Heart right ventricle (tissue), 16 donors: ENCODE measurements at regions of chr7 and their contacts with region 1.

Region 1: DNA sequence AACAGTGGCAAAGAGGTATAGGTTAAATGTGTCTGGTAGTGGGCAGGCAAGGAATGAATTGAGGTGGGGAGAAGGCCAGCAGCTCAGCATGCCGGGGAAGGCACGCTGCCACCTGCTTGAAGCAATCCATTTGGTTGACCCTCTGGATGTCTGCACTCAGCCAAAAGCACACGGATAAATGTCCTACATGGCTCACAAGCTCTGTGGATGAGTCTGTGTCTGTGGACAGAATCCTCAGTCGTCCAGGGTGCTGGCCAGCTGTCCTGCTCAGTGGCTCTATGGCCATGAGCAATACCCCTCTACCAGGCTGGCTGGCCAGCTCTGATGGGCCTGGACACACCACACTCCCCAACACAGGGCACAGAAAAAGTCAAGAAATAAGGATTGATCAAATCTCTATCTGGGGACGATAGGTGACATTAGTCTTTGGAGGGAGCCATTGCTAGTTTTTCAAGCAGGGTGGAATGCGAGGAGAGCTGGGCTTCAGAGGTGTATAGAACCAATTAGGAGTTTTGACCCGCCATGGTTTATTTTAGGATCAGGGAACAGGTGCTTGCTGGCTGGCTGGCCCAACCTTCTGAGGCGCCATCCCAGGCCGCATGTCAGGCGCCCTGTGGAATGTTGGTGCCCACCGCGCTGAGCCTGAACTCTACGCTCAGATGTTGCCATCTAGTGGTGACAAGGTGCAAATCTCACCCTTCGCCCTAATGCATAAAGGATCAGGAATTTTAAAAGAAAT is 493.4 kb downstream of the TNS3 start:
- DNase-seq: peak; percentile 54 to 65
- ATAC-seq: peak; percentile 85 to 95 (median 90)
- H3K4me3 ChIP-seq: no peak overlapping the region
- H3K27ac ChIP-seq: no peak overlapping the region
- H3K4me1 ChIP-seq: peaks cover 0 to 13% (median 7%) of the 10 kb centered on the region in 9 donors
- H3K27me3 ChIP-seq: no peaks in the 10 kb centered on the region
- CTCF ChIP-seq: peak; percentile 80 to 97 (median 92)

Region 2: GRCh38 chr7:45923290-45923689 is 1165.2 kb before region 1 on chr7:
- intact Hi-C with region 1: loop called (anchors 2 to 5 kb)
- DNase-seq: peak; percentile 75 to 79
- ATAC-seq: peak in 7 of 8 donors; percentile 47 to 74 (median 66)
- H3K4me3 ChIP-seq: peak overlapping the region in 9 of 10 donors; percentile 34 to 77 (median 63)
- H3K27ac ChIP-seq: peak overlapping the region in 5 of 10 donors; percentile 7 to 73 (median 70)
- H3K4me1 ChIP-seq: peaks cover 5 to 53% (median 45%) of the 10 kb centered on the region in 9 donors
- H3K27me3 ChIP-seq: peaks cover 0 to 57% (median 0%) of the 10 kb centered on the region in 7 donors
- CTCF ChIP-seq: peak; percentile 88 to 98 (median 93)

Region 3: GRCh38 chr7:46369933-46370654 is 718.4 kb before region 1 on chr7:
- intact Hi-C with region 1: loop called in 1 of 10 experiments (anchors 10 kb)
- DNase-seq: no peak
- ATAC-seq: peak in 4 of 8 donors; percentile 47 to 67 (median 54)
- H3K4me3 ChIP-seq: no peak overlapping the region
- H3K27ac ChIP-seq: no peak overlapping the region
- H3K4me1 ChIP-seq: peaks cover 0 to 4% (median 0%) of the 10 kb centered on the region in 9 donors
- H3K27me3 ChIP-seq: no peaks in the 10 kb centered on the region
- CTCF ChIP-seq: no peak

Region 4: DNA sequence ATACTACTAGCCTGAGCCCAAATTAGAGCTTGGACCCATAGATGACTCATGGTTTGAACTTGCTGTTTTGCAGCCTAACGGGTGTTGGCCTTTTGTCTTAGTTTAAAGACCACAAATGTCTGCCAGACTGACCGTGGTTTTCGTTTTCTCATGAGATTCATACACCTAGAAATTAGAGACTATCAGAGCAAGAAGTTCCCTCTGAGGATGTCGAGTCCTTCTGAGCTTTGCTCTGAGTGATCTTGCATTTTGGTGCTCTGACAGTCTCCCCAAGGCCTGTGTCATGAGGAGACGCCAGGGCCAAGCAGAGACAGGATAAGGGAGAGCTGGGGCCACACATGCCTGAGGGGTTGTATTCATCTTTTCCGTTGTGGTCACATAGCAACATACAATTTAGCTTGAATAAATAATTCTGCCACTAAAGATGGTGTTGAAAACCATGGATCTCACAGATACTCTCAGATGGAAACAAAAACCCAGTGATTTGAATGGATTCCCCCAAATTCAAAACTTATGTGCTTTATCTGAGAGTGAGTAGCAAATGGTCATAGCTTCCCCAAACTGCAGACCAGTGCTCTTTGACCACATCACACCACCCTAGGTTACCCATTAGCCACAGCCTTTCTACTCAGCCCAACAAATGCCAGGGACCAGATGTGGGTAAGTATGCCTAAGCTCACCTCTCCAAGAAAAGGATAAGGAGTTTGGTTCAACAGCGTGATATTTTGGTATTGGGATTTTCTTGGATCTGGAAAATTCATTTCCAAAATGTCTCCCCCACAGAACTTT is 405.5 kb before region 1 on chr7:
- intact Hi-C with region 1: loop called in 1 of 10 experiments (anchors 10 kb)
- DNase-seq: no peak
- ATAC-seq: no peak
- H3K4me3 ChIP-seq: no peak overlapping the region
- H3K27ac ChIP-seq: no peak overlapping the region
- H3K4me1 ChIP-seq: peaks cover 0 to 6% (median 0%) of the 10 kb centered on the region in 9 donors
- H3K27me3 ChIP-seq: no peaks in the 10 kb centered on the region
- CTCF ChIP-seq: no peak

Region 5: DNA sequence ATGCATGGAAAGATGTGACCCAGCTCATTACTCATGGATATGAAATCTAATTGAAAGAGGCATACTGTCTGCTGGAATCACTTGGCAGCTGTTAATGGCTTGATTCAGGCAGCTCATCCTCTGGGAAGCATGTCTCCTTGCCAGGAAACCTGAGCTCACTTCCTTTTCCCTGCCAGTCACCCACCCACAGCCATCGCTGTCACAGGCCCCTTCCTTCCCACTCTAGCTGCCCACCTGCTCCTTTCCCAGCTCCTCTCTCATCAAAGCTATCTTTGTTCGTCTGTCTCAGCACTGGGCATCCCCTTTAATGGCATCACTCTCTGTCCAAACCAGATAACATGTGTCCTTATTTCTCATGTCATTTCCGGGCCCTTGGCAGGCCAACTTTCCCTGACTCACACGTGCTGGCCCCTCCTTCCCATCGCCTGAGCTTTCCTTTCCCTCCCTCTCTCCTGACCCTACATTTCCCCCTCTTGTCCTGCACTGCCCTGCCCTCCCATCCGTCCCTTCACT is 228.5 kb before region 1 on chr7:
- intact Hi-C with region 1: no loop called
- DNase-seq: peak in 1 of 2 donors; percentile 32
- ATAC-seq: peak; percentile 23 to 83 (median 62)
- H3K4me3 ChIP-seq: no peak overlapping the region
- H3K27ac ChIP-seq: peak overlapping the region in 1 of 10 donors; percentile 31
- H3K4me1 ChIP-seq: peaks cover 0 to 6% (median 0%) of the 10 kb centered on the region in 9 donors
- H3K27me3 ChIP-seq: no peaks in the 10 kb centered on the region
- CTCF ChIP-seq: no peak

Region 6: GRCh38 chr7:46932676-46933424 is 155.6 kb before region 1 on chr7:
- intact Hi-C with region 1: loop called in 3 of 10 experiments (anchors 10 kb)
- DNase-seq: peak in 1 of 2 donors; percentile 24
- ATAC-seq: peak; percentile 51 to 90 (median 74)
- H3K4me3 ChIP-seq: no peak overlapping the region
- H3K27ac ChIP-seq: peak overlapping the region in 8 of 10 donors; percentile 5 to 70 (median 58)
- H3K4me1 ChIP-seq: peaks cover 0 to 48% (median 23%) of the 10 kb centered on the region in 9 donors
- H3K27me3 ChIP-seq: no peaks in the 10 kb centered on the region
- CTCF ChIP-seq: peak in 6 of 9 donors; percentile 12 to 51 (median 34)

Region 7: GRCh38 chr7:47104206-47104549 is 15.7 kb after region 1 on chr7:
- intact Hi-C with region 1: no loop called
- DNase-seq: no peak
- ATAC-seq: no peak
- H3K4me3 ChIP-seq: no peak overlapping the region
- H3K27ac ChIP-seq: no peak overlapping the region
- H3K4me1 ChIP-seq: peaks cover 0 to 3% (median 0%) of the 10 kb centered on the region in 9 donors
- H3K27me3 ChIP-seq: no peaks in the 10 kb centered on the region
- CTCF ChIP-seq: no peak

Region 8: DNA sequence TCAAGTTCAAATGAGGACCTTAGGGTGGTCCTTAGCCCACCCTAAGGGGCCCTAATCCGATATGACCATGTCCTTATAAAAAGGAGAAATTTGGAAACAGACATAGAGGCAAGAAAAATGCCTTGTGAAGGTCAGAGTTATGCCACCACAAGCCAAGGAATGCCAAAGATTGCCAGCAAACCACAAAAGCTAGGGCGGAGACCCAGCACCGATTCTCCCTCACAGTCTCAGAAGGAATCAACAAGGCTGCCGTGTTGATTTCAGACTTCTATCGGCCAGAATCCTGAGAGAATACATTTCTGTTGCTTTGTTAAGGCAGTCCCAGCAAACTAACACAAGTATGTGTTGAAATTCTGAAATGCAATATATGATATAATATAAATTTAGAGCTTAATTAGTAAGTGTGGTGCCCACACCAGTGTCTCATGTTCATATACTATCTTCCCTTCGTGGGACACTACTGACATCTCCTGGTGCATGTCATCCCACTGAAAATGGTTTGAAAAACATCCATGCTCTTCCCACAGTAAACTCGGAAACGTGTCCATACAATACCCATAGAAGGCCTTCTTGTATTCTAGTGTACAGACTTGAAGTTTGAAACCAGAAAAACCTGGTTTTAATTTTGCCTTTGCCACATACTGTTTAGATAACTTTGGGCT is 144.4 kb after region 1 on chr7:
- intact Hi-C with region 1: no loop called
- DNase-seq: no peak
- ATAC-seq: peak in 3 of 8 donors; percentile 32 to 46 (median 39)
- H3K4me3 ChIP-seq: no peak overlapping the region
- H3K27ac ChIP-seq: no peak overlapping the region
- H3K4me1 ChIP-seq: peaks cover 0 to 9% (median 0%) of the 10 kb centered on the region in 9 donors
- H3K27me3 ChIP-seq: no peaks in the 10 kb centered on the region
- CTCF ChIP-seq: peak in 8 of 9 donors; percentile 11 to 55 (median 42)